ENCODE measurements at regions of chr2 and their contacts with region 1.

Region 1: GRCh38 chr2:39728941-39729351 is 50.1 kb downstream of the THUMPD2 start:
- DNase-seq: no peak
- H3K4me3 ChIP-seq: no peak overlapping the region
- CTCF ChIP-seq: peak; percentile 54

Region 2: DNA sequence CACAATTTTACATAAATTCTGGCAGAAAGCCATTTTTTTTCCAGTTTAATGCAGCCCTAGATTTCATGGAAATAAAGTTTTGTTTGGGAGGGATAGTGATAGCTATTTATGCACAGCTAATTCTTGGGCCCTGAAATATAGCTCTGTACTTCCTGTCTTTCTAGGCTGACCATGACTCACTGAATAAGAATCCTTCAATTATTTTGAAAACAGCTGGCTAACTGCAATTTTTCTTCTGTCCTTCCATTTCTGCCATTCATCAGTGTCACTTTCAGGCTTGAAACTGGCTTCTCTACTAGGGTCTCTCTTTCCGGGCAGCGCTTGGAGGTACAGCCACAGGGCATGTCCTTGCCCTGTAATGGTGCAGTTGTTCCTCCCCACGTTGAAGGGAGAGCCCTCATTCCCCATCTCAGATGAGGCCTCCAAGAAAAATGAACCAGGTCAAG is 160.4 kb before region 1 on chr2:
- CTCF ChIA-PET with region 1: no interaction called
- POLR2A ChIA-PET with region 1: no interaction called
- DNase-seq: peak; percentile 31
- H3K4me3 ChIP-seq: no peak overlapping the region
- CTCF ChIP-seq: no peak

Region 3: GRCh38 chr2:39593439-39594393 is 135.2 kb before region 1 on chr2:
- CTCF ChIA-PET with region 1: interaction called, 25 read pairs
- POLR2A ChIA-PET with region 1: no interaction called
- DNase-seq: peak; percentile 37
- H3K4me3 ChIP-seq: no peak overlapping the region
- CTCF ChIP-seq: peak; percentile 79

Region 4: GRCh38 chr2:39715095-39715494 is 13.9 kb before region 1 on chr2:
- CTCF ChIA-PET with region 1: interaction called, 27 read pairs
- POLR2A ChIA-PET with region 1: no interaction called
- DNase-seq: no peak
- H3K4me3 ChIP-seq: no peak overlapping the region
- CTCF ChIP-seq: no peak

Region 5: GRCh38 chr2:39743269-39743776 is 14.4 kb after region 1 on chr2:
- CTCF ChIA-PET with region 1: interaction called, 12 read pairs
- POLR2A ChIA-PET with region 1: interaction called, 3 read pairs
- DNase-seq: no peak
- H3K4me3 ChIP-seq: no peak overlapping the region
- CTCF ChIP-seq: no peak